Activated CD8-positive, alpha-beta T cell treated with anti-CD3 and anti-CD28 coated beads, Interleukin-2, amount 10 ng/mL, durations not matched to agents 7 days and 5 days (primary cell): ENCODE measurements at regions of chr5 and their contacts with region 1.

Region 1: DNA sequence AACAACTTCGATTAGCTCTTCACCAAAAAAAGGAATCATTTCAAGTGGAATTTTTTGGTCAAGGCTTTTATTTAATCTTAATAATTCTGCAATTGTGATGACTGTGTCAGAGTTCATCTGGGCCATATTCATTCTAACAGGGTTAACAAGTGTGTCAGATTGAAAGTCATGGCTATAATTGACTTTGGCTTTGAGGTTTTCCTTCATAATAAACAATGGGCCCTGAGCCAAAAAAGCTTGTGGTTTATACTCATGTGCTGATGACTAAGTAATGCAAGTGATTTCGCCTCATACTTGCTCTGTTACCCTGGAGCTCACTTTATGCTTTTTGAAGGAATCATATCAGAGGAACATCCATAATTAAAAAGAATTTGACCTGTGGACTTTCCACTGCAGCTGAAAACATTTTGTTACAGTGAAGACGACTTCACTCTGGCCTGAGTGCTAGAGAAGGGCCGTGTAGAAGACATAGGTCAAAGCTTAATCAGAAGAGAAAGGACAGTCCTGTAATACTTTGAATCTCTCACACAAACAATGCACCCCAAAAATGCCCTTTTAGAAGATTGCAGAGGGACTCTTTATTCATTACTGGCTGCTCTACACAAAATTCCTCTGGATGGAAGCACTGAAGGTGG is 101.7 kb downstream of the GDNF start:
- DNase-seq: peak; percentile 49
- ATAC-seq: peak; percentile 53
- H3K4me3 Mint-ChIP-seq: no peak overlapping the region
- H3K27ac Mint-ChIP-seq: no peak overlapping the region
- H3K4me1 Mint-ChIP-seq: peaks cover 19% of the 10 kb centered on the region
- H3K27me3 Mint-ChIP-seq: no peaks in the 10 kb centered on the region

Region 2: GRCh38 chr5:37034955-37035354 is 703.2 kb before region 1 on chr5:
- CTCF ChIA-PET with region 1: no interaction called
- POLR2A ChIA-PET with region 1: no interaction called
- DNase-seq: no peak
- ATAC-seq: no peak
- H3K4me3 Mint-ChIP-seq: no peak overlapping the region
- H3K27ac Mint-ChIP-seq: no peak overlapping the region
- H3K4me1 Mint-ChIP-seq: peaks cover 1% of the 10 kb centered on the region
- H3K27me3 Mint-ChIP-seq: no peaks in the 10 kb centered on the region

Region 3: DNA sequence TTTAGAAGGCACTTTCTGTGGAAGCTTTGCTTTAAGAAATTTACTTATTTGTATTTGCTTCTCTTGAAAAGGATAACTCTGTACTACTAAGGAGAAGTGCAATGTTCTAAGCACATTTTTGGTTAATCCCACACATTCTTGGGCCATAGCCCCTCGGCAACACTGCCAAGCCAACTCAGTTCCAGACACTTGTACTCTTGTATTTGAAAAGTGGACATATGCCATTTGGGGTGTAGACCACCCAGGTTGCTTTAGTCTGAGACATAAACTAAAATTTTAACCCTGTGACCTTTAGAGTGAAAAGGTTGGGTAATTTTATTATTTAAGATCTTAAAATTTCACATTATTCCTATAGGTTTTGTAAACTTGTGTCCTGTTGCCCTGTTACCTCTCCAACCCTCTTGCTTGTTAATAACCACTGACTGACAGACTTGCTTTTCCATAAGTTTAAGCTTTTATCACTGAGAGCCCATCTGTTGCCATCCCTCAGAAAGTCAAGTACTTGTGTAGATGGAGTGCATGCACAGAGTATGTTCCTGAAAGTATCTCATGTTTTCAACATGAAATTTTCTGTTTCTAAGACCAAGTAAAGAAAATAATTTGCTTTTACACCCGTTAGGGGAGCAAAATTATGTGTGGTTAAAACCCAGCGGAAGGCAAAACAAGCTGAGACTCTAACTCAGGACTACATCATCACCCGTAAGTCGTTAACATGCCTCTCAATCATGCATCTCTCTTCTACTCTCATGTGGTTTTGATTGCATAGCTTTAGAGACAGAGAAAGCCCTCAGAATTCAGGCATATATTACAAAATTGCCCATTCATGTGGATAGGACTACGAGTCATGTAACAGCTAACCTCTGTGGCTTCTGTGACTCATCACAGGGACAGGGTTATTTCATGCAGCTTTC is 15.7 kb before region 1 on chr5:
- CTCF ChIA-PET with region 1: interaction called, 34 read pairs
- POLR2A ChIA-PET with region 1: interaction called, 3 read pairs
- DNase-seq: peak; percentile 56
- ATAC-seq: peak; percentile 87
- H3K4me3 Mint-ChIP-seq: no peak overlapping the region
- H3K27ac Mint-ChIP-seq: peak overlapping the region; percentile 66
- H3K4me1 Mint-ChIP-seq: peaks cover 23% of the 10 kb centered on the region
- H3K27me3 Mint-ChIP-seq: no peaks in the 10 kb centered on the region

Region 4: GRCh38 chr5:37751227-37751626 is 13.1 kb after region 1 on chr5:
- CTCF ChIA-PET with region 1: no interaction called
- POLR2A ChIA-PET with region 1: no interaction called
- DNase-seq: no peak
- ATAC-seq: no peak
- H3K4me3 Mint-ChIP-seq: no peak overlapping the region
- H3K27ac Mint-ChIP-seq: no peak overlapping the region
- H3K4me1 Mint-ChIP-seq: no peaks in the 10 kb centered on the region
- H3K27me3 Mint-ChIP-seq: no peaks in the 10 kb centered on the region

Region 5: DNA sequence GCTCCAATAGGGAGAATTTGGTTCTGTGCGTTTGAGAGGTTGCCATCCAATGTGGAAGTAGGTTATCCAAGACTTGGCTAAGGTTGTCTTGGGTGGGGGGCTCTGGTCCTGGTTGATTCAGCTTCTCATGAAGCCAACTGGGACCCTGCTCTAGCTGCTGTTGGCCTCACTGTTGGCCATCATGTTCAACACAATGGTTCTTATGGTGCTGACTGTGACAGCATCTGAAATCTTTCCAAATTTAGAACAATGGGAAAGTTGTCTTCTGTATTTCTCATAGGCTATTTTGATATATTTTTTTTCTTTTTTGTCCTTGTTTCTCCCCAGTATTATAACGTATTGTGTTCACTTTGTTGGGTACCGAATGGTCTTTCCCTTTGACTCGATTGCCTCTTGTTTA is 29.8 kb after region 1 on chr5:
- CTCF ChIA-PET with region 1: no interaction called
- POLR2A ChIA-PET with region 1: no interaction called
- DNase-seq: no peak
- ATAC-seq: no peak
- H3K4me3 Mint-ChIP-seq: no peak overlapping the region
- H3K27ac Mint-ChIP-seq: no peak overlapping the region
- H3K4me1 Mint-ChIP-seq: no peaks in the 10 kb centered on the region
- H3K27me3 Mint-ChIP-seq: no peaks in the 10 kb centered on the region

Region 6: GRCh38 chr5:38316544-38317224 is 578.5 kb after region 1 on chr5:
- CTCF ChIA-PET with region 1: no interaction called
- POLR2A ChIA-PET with region 1: no interaction called
- DNase-seq: no peak
- ATAC-seq: no peak
- H3K4me3 Mint-ChIP-seq: no peak overlapping the region
- H3K27ac Mint-ChIP-seq: no peak overlapping the region
- H3K4me1 Mint-ChIP-seq: no peaks in the 10 kb centered on the region
- H3K27me3 Mint-ChIP-seq: no peaks in the 10 kb centered on the region